ENCODE measurements at regions of chr4 and their contacts with region 1.

Region 1: DNA sequence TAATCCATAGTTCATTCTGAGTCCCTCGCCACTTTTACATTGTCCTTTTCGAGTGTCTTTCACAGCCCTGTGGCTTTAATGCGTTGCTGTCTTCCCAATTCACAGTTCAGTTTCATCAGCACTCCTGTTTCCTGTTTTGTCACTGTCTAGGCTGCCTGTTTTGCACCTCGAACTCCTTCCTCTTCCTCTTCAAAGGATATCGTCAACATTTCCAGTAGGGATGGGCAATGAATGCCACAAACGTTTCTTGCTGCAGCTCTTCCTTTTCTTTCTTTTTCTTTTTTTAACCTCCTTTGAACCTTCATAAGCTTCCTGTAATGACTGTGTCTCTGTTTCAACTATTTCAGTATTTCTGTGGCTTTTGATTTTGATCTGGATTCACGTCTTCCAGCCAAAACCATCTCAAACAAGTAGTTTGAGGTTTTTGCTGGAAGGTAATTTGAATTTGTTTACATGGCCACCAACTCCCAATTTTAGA is 105.4 kb downstream of the ANXA3 start:
- DNase-seq: peak; percentile 26
- ATAC-seq: peak; percentile 44
- H3K4me3 Mint-ChIP-seq: peak overlapping the region; percentile 37
- H3K27ac Mint-ChIP-seq: peak overlapping the region; percentile 79
- H3K4me1 Mint-ChIP-seq: peaks cover 38% of the 10 kb centered on the region
- H3K27me3 Mint-ChIP-seq: peaks cover 2% of the 10 kb centered on the region

Region 2: DNA sequence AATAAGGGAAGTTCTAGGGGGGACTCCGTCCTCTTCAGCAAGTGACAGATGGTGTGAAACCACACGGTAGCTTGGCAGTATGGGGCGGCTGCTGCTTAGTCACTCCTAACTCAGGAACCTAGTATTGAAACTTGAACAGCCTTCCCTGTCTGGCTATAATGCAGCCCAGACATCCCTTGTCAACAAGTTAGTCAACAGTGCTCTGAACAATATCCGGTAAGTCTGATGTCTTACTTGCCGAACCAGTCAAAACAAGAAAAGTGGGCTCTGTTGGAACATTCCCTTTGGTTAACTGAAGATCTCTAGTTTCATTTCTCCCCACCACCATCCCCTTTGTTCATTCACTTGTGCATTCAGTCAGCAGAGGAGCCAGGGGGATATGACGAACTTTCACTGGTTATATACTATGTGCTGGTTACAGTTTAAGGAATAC is 1070.0 kb before region 1 on chr4:
- CTCF ChIA-PET with region 1: no interaction called
- POLR2A ChIA-PET with region 1: no interaction called
- intact Hi-C with region 1: loop called in 1 of 2 experiments (anchors 1 kb)
- DNase-seq: peak; percentile 87
- ATAC-seq: peak; percentile 94
- H3K4me3 Mint-ChIP-seq: peak overlapping the region; percentile 54
- H3K27ac Mint-ChIP-seq: peak overlapping the region; percentile 84
- H3K4me1 Mint-ChIP-seq: peaks cover 66% of the 10 kb centered on the region
- H3K27me3 Mint-ChIP-seq: peaks cover 16% of the 10 kb centered on the region

Region 3: GRCh38 chr4:78542373-78542772 is 114.6 kb before region 1 on chr4:
- CTCF ChIA-PET with region 1: no interaction called
- POLR2A ChIA-PET with region 1: no interaction called
- intact Hi-C with region 1: loop called in 1 of 2 experiments (anchors 5 kb)
- DNase-seq: no peak
- ATAC-seq: no peak
- H3K4me3 Mint-ChIP-seq: no peak overlapping the region
- H3K27ac Mint-ChIP-seq: no peak overlapping the region
- H3K4me1 Mint-ChIP-seq: peaks cover 14% of the 10 kb centered on the region
- H3K27me3 Mint-ChIP-seq: peaks cover 19% of the 10 kb centered on the region

Region 4: GRCh38 chr4:78612398-78613178 is 44.4 kb before region 1 on chr4:
- CTCF ChIA-PET with region 1: no interaction called
- POLR2A ChIA-PET with region 1: no interaction called
- intact Hi-C with region 1: loop called in 1 of 2 experiments (anchors 5 kb)
- DNase-seq: peak; percentile 32
- ATAC-seq: peak; percentile 34
- H3K4me3 Mint-ChIP-seq: no peak overlapping the region
- H3K27ac Mint-ChIP-seq: no peak overlapping the region
- H3K4me1 Mint-ChIP-seq: peaks cover 34% of the 10 kb centered on the region
- H3K27me3 Mint-ChIP-seq: no peaks in the 10 kb centered on the region

Region 5: GRCh38 chr4:78775303-78776030 is 118.5 kb after region 1 on chr4:
- CTCF ChIA-PET with region 1: no interaction called
- POLR2A ChIA-PET with region 1: no interaction called
- intact Hi-C with region 1: loop called (anchors 1 to 2 kb)
- DNase-seq: peak; percentile 91
- ATAC-seq: peak; percentile 75
- H3K4me3 Mint-ChIP-seq: peak overlapping the region; percentile 84
- H3K27ac Mint-ChIP-seq: peak overlapping the region; percentile 96
- H3K4me1 Mint-ChIP-seq: peaks cover 17% of the 10 kb centered on the region
- H3K27me3 Mint-ChIP-seq: no peaks in the 10 kb centered on the region

Region 6: GRCh38 chr4:79050541-79050880 is 393.5 kb after region 1 on chr4:
- CTCF ChIA-PET with region 1: no interaction called
- POLR2A ChIA-PET with region 1: no interaction called
- intact Hi-C with region 1: no loop called
- DNase-seq: no peak
- ATAC-seq: no peak
- H3K4me3 Mint-ChIP-seq: no peak overlapping the region
- H3K27ac Mint-ChIP-seq: no peak overlapping the region
- H3K4me1 Mint-ChIP-seq: no peaks in the 10 kb centered on the region
- H3K27me3 Mint-ChIP-seq: peaks cover 5% of the 10 kb centered on the region

Region 7: GRCh38 chr4:79831701-79832514 is 1174.9 kb after region 1 on chr4:
- CTCF ChIA-PET with region 1: no interaction called
- POLR2A ChIA-PET with region 1: no interaction called
- intact Hi-C with region 1: loop called in 1 of 2 experiments (anchors 10 kb)
- DNase-seq: no peak
- ATAC-seq: peak; percentile 89
- H3K4me3 Mint-ChIP-seq: no peak overlapping the region
- H3K27ac Mint-ChIP-seq: peak overlapping the region; percentile 3
- H3K4me1 Mint-ChIP-seq: peaks cover 10% of the 10 kb centered on the region
- H3K27me3 Mint-ChIP-seq: peaks cover 17% of the 10 kb centered on the region

Measured in activated CD4-positive, alpha-beta T cell treated with anti-CD3 and anti-CD28 coated beads for 36 hours (primary cell).